Naive thymus-derived CD4-positive, alpha-beta T cell (primary cell): ENCODE measurements at regions of chr1 and their contacts with region 1.

Region 1: GRCh38 chr1:234499119-234499942 is 20.4 kb upstream of the TARBP1 start:
- DNase-seq: peak; percentile 65 to 85 (median 78)
- ATAC-seq: peak; percentile 96
- H3K4me3 ChIP-seq: no peak overlapping the region
- H3K4me3 Mint-ChIP-seq: peak overlapping the region in 2 of 10 donors; percentile 33 to 62
- H3K27ac ChIP-seq: no peak overlapping the region
- H3K27ac Mint-ChIP-seq: peak overlapping the region in 4 of 9 donors; percentile 34 to 82 (median 74)
- H3K4me1 ChIP-seq: peaks cover 0 to 4% of the 10 kb centered on the region in 2 donors
- H3K4me1 Mint-ChIP-seq: peaks cover 0 to 62% (median 6%) of the 10 kb centered on the region in 7 donors
- H3K27me3 ChIP-seq: no peaks in the 10 kb centered on the region
- H3K27me3 Mint-ChIP-seq: no peaks in the 10 kb centered on the region

Region 2: DNA sequence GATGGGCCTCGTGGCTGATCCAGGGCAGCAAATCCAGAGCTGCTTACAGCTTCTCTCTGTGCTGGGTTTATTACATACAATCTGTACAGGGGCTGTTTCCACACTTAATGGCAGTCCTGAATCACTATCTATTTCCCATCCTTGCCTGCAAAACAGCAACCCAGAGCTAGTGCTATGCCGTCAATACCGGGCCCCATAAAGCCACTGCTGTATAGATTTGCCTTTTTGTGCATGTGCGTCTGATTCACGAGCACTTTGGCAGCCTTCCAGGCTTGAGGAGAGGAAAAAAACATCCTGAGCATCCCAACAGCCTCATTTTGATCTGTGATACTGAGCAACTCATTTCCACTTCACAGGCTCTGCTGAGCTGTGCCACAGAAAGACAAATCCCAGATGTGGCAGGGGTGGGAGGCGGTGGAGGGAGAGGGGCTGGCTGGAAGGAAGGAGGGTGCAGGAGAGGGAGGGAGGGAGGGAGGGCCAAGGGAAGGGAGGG is 44.8 kb after region 1 on chr1:
- CTCF ChIA-PET with region 1: no interaction called
- POLR2A ChIA-PET with region 1: no interaction called
- intact Hi-C with region 1: loop called in 1 of 2 experiments (anchors 10 kb)
- DNase-seq: peak in 7 of 9 donors; percentile 59 to 78 (median 70)
- ATAC-seq: peak; percentile 68
- H3K4me3 ChIP-seq: no peak overlapping the region
- H3K4me3 Mint-ChIP-seq: peak overlapping the region in 2 of 10 donors; percentile 40 to 72
- H3K27ac ChIP-seq: no peak overlapping the region
- H3K27ac Mint-ChIP-seq: peak overlapping the region; percentile 18 to 86 (median 76)
- H3K4me1 ChIP-seq: peaks cover 0 to 13% of the 10 kb centered on the region in 2 donors
- H3K4me1 Mint-ChIP-seq: peaks cover 17 to 40% (median 20%) of the 10 kb centered on the region in 7 donors
- H3K27me3 ChIP-seq: no peaks in the 10 kb centered on the region
- H3K27me3 Mint-ChIP-seq: no peaks in the 10 kb centered on the region

Region 3: DNA sequence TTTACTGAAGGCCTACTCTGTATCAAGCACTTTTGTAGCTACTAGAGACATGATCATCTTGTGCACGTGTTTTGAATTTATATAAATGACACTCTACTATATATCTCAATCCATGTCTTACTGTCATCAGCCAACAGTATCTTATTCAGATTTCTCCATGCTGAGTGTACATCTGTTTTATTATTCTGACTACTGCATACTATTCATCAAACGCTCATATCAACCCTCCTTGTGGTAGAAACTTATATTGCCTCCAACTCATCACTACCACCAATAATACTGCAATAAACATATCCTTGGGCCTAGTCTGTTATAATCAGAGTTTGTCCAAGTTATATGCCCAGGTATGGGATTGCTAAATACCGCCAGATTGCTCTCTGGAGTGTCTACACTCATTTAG is 192.2 kb after region 1 on chr1:
- CTCF ChIA-PET with region 1: no interaction called
- POLR2A ChIA-PET with region 1: no interaction called
- intact Hi-C with region 1: loop called in 1 of 2 experiments (anchors 1 kb)
- DNase-seq: peak in 6 of 9 donors; percentile 8 to 41 (median 28)
- ATAC-seq: peak; percentile 69
- H3K4me3 ChIP-seq: no peak overlapping the region
- H3K4me3 Mint-ChIP-seq: no peak overlapping the region
- H3K27ac ChIP-seq: no peak overlapping the region
- H3K27ac Mint-ChIP-seq: peak overlapping the region in 3 of 9 donors; percentile 4 to 7 (median 5)
- H3K4me1 ChIP-seq: no peaks in the 10 kb centered on the region
- H3K4me1 Mint-ChIP-seq: peaks cover 0 to 7% (median 4%) of the 10 kb centered on the region in 7 donors
- H3K27me3 ChIP-seq: no peaks in the 10 kb centered on the region
- H3K27me3 Mint-ChIP-seq: peaks cover 0 to 4% (median 0%) of the 10 kb centered on the region in 5 donors

Region 4: DNA sequence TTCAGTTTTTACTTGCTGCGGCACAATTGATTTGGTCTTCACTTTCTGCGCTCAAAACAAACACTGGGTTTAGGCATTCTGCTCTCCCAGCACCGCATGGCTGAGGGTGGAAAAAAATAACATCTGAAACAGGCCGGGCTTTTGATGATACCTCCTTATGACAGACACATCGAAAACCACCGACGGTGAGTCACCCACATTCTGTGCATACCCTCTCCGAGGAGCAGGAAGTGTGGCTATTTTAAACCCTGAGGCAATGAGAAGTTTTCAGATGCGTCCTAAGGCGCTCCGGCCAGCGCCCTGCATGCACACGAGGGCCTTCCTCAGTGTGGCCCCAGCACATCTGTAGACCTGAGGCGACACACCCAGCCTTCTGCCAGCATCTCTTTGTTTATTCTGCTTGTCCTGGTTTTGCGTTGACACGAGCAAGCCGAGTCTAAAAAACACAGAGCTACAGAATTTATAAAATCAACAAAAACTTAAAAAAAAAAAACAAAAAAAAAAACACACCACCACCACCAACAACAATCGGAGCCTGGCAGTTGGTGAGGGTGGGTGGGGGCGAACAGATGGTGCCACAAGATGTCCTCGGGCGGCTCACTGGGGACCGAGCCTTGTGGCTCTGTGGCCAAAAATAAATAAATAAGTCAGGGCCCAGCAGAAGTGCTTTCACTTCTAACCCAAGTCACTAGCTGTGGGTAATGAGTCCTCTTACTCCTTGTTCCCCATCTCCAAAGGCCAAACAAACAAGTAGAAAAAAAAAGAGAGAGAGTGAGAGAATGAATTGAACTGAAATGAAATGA is 273.2 kb after region 1 on chr1:
- CTCF ChIA-PET with region 1: no interaction called
- POLR2A ChIA-PET with region 1: no interaction called
- intact Hi-C with region 1: loop called in 1 of 2 experiments (anchors 1 kb)
- DNase-seq: peak; percentile 42 to 88 (median 64)
- ATAC-seq: peak; percentile 88
- H3K4me3 ChIP-seq: peak overlapping the region; percentile 7
- H3K4me3 Mint-ChIP-seq: peak overlapping the region; percentile 55 to 83 (median 74)
- H3K27ac ChIP-seq: peak overlapping the region; percentile 64
- H3K27ac Mint-ChIP-seq: peak overlapping the region; percentile 79 to 95 (median 90)
- H3K4me1 ChIP-seq: peaks cover 14 to 53% of the 10 kb centered on the region in 2 donors
- H3K4me1 Mint-ChIP-seq: peaks cover 39 to 69% (median 54%) of the 10 kb centered on the region in 7 donors
- H3K27me3 ChIP-seq: no peaks in the 10 kb centered on the region
- H3K27me3 Mint-ChIP-seq: no peaks in the 10 kb centered on the region

Region 5: DNA sequence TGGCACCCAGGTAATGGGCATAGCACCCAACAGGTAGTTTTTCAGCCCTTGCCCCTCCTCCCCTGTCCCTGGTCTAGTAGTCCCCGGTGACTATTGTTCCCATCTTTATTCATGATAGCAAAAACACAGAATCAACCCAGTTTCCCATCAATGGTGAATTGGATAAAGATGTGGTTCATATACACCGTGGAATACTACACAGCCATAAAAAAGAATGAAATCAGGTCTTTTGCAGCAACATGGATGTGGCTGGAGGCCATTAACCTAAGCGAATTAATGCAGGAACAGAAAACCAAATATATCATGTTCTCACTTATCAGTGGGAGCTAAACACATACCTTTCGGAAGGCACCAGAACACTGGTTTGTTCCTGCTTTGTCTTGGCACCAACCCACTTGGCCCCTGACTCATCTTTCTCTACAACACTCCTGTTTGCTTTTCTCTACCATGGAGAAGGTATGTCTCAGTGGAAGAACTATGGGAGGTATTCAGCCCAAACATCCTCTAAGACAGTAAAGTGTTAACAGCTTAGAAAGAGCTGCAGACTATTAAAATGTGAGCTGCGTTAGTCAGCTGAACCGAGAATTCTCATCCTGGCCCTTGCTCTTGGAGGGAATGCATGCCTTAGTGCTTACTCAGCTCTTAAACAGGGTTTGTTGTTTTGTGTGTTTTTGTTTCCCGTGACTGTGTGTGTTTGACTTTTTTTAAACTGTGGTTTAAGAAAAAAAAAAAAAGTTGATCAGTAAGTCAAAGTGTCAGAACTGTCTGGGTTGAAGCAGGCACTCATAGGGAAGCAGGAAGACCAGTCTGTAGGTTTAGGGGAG is 426.3 kb after region 1 on chr1:
- CTCF ChIA-PET with region 1: no interaction called
- POLR2A ChIA-PET with region 1: no interaction called
- intact Hi-C with region 1: loop called in 1 of 2 experiments (anchors 2 kb)
- DNase-seq: peak in 3 of 9 donors; percentile 25 to 35 (median 30)
- ATAC-seq: peak; percentile 50
- H3K4me3 ChIP-seq: no peak overlapping the region
- H3K4me3 Mint-ChIP-seq: peak overlapping the region; percentile 45 to 80 (median 66)
- H3K27ac ChIP-seq: no peak overlapping the region
- H3K27ac Mint-ChIP-seq: peak overlapping the region; percentile 80 to 93 (median 83)
- H3K4me1 ChIP-seq: peaks cover 26 to 47% of the 10 kb centered on the region in 2 donors
- H3K4me1 Mint-ChIP-seq: peaks cover 37 to 60% (median 55%) of the 10 kb centered on the region in 7 donors
- H3K27me3 ChIP-seq: no peaks in the 10 kb centered on the region
- H3K27me3 Mint-ChIP-seq: no peaks in the 10 kb centered on the region

Region 6: DNA sequence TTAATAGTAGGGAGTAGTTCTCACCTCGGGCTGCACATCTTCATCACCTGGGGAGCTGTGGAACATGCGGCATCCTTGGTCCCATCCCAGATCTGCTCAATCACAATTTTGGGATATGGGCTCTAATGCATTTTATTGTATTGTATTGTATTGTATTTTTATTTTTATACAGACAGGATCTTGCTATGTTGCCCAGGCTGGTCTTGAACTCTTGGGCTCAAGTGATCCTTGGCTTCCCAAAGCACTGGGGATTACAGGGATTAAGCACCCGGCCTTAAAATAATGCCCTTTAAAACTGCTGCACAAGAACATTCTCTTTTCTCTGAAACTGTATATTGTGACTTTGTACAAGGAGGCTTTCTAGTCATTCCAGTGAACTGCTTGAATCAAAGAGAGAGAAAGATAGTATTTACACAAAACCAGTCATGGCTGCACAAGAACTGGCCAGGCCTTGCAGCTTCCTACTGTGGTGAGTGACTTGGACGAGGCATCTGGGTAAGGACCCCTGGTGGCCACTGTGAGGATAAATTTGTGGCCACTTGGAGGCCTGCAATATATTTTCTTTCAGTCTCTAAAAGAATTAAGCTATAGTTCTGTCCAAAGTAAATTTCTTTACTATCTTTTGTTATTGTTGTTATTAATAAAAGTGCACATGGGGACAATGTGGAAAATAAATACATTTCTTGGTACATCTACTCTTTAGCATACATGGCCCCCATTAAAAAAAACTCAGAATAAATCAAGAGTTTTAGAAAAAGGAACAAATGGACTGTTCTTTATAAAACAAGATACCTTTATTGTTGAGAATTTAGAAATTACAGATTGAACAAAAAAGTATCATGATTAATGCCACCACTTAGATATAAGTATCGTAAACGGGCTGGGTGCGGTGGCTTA is 915.9 kb after region 1 on chr1:
- CTCF ChIA-PET with region 1: no interaction called
- POLR2A ChIA-PET with region 1: no interaction called
- intact Hi-C with region 1: loop called in 1 of 2 experiments (anchors 1 kb)
- DNase-seq: peak in 8 of 9 donors; percentile 24 to 61 (median 46)
- ATAC-seq: peak; percentile 87
- H3K4me3 ChIP-seq: no peak overlapping the region
- H3K4me3 Mint-ChIP-seq: no peak overlapping the region
- H3K27ac ChIP-seq: no peak overlapping the region
- H3K27ac Mint-ChIP-seq: no peak overlapping the region
- H3K4me1 ChIP-seq: no peaks in the 10 kb centered on the region
- H3K4me1 Mint-ChIP-seq: peaks cover 0 to 15% (median 6%) of the 10 kb centered on the region in 7 donors
- H3K27me3 ChIP-seq: no peaks in the 10 kb centered on the region
- H3K27me3 Mint-ChIP-seq: no peaks in the 10 kb centered on the region

Region 7: DNA sequence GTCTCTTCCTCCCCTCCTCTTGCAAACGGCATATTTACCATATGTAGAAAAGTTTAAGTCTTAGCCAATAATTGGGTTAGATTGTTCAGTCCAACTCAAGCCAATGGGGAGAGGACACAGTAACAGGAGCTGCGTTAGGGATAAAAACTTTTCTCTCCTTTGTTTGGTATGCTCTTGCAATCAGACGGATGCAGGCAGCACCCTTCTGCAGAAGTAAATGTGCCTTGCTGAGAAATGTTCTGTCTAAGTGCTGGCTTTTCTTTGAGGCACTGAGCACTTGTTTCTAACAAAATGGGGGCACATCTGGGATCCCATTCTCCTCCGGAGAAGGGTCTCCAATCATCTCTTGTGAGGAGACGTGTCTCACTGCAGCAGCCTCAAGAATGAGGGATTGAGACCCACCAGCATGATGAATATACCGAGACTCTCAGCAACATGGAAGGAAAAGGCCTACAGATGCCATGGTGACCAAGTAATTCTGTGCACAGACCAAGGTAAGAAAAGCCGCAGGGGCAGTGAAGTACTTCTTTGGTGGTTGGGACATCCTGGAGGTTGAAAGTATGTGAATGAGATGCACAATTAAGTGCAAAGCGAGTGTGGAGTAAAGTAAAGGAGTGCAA is 1170.9 kb after region 1 on chr1:
- CTCF ChIA-PET with region 1: no interaction called
- POLR2A ChIA-PET with region 1: no interaction called
- intact Hi-C with region 1: no loop called
- DNase-seq: no peak
- ATAC-seq: no peak
- H3K4me3 ChIP-seq: no peak overlapping the region
- H3K4me3 Mint-ChIP-seq: no peak overlapping the region
- H3K27ac ChIP-seq: no peak overlapping the region
- H3K27ac Mint-ChIP-seq: no peak overlapping the region
- H3K4me1 ChIP-seq: no peaks in the 10 kb centered on the region
- H3K4me1 Mint-ChIP-seq: peaks cover 0 to 5% (median 0%) of the 10 kb centered on the region in 7 donors
- H3K27me3 ChIP-seq: no peaks in the 10 kb centered on the region
- H3K27me3 Mint-ChIP-seq: no peaks in the 10 kb centered on the region